ENCODE measurements at regions of chr12 and their contacts with region 1.

Region 1: DNA sequence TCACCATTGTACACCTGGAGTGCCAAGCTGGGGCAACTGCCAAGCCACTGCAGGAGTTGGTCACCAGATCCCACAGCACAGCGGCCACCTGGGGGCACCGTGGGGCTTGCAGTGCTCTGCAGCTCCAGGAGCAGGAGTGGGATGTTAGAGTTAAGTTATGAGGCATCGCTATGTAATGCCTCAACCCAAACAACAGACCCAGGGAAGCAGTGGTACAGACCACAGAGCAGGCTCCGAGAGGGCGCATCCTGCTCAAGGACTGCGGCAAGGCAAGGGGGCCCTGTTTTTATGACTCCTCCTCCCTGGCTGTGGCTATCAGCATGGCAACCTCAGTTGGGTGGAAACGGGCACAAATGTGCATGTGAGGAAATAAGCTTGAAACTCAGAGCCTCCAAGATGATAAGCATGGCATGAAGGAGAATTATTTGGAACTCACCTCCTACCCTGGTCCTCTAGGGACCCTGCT is 63.1 kb downstream of the ARL6IP4 start:
- DNase-seq: peak; percentile 83
- H3K4me3 ChIP-seq: no peak overlapping the region
- H3K27ac ChIP-seq: peak overlapping the region; percentile 39
- H3K4me1 ChIP-seq: peaks cover 64% of the 10 kb centered on the region
- H3K27me3 ChIP-seq: no peaks in the 10 kb centered on the region
- CTCF ChIP-seq: peak; percentile 81

Region 2: DNA sequence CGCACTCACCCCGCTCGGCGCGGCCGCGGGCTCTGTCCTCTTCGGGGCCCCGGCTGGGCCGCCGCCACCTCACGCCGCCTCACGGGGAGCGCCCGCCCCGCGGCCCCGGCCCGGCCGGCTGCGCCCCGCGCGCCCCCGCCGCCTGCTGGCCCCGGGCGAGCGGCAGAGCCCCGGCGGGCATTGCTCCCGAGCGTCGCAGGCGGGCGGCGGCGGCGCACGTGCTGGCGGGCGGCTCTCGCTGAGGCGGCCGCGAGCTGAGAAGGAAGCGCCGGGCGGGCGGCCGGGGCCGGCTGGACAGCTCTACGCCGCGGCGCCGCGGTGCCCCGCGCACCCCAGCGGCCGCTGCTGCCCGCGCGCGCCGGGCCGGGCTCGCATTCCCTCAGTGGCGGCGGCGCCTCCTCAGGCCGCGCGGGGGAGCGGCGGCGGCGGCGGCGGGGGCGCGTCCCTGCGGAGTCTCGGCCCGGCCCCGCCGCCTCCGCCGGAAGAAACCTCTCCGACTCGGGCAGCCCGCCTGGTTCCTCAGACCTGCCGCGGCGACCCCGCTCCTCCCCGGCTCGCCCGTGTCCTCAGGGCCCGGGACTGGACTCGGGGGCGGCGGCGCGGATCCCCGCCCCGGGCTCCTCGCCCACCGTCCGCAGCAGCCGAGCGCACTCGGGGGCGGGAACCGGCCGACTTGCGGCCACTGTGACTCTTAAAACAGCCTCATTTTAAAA is 107.3 kb after region 1 on chr12 and contains the start of gene PITPNM2:
- intact Hi-C with region 1: loop called (anchors 10 kb)
- DNase-seq: peak; percentile 70
- H3K4me3 ChIP-seq: peak within 1 kb of the TSS; percentile 92
- H3K27ac ChIP-seq: peak within 1 kb of the TSS; percentile 89
- H3K4me1 ChIP-seq: peaks cover 41% of the 10 kb centered on the region
- H3K27me3 ChIP-seq: no peaks in the 10 kb centered on the region
- CTCF ChIP-seq: peak; percentile 41
- total RNA-seq, gene PITPNM2: 18.4 TPM